ENCODE measurements at regions of chr11 and their contacts with region 1.

Region 1: GRCh38 chr11:59542142-59542810 is 30.9 kb downstream of the OR4D9 start:
- DNase-seq: no peak
- H3K4me3 Mint-ChIP-seq: no peak overlapping the region
- H3K27ac Mint-ChIP-seq: no peak overlapping the region
- H3K4me1 Mint-ChIP-seq: peaks cover 9% of the 10 kb centered on the region
- H3K27me3 Mint-ChIP-seq: peaks cover 13% of the 10 kb centered on the region

Region 2: DNA sequence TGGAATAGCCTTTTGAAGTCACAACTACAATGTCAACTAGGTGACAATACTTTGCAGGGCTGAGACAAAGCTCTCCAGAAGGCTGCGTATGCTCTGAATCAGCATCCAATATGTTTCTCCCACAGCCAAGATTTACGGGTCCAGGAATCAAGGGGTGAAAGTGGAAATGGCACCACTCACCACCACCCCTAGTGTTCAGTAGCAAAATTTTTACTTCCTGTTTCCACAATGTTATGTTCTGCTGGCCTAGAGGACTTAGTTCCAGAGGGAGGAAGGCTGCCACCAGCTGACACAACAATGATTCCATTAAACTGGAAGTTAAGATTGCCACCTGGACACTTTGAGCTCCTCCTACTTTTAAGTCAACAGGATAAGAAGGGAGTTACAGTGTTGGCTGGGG is 261.1 kb before region 1 on chr11:
- intact Hi-C with region 1: no loop called
- DNase-seq: no peak
- H3K4me3 Mint-ChIP-seq: no peak overlapping the region
- H3K27ac Mint-ChIP-seq: no peak overlapping the region
- H3K4me1 Mint-ChIP-seq: peaks cover 16% of the 10 kb centered on the region
- H3K27me3 Mint-ChIP-seq: peaks cover 13% of the 10 kb centered on the region

Region 3: DNA sequence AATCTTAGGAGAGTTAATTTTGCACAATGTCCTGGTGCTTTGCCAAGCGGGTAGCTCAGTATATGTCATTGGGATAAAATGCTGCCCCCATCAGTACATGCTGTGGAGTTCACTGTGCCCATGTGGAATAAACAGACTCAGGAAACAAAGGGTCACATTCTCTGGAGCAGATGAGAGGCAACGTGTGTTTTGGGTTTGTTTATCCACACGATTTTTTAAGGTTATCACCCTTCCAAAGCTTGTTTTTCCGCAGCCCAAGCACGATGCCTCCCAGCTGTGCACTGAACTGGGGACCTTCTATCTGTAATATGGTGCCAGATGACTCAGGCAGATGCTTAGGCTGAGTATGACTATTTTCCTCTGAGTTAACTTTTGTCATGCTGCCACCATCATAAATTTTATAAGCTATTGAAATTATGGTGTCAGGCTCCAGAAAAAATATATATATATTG is 79.1 kb before region 1 on chr11:
- intact Hi-C with region 1: no loop called
- DNase-seq: no peak
- H3K4me3 Mint-ChIP-seq: no peak overlapping the region
- H3K27ac Mint-ChIP-seq: no peak overlapping the region
- H3K4me1 Mint-ChIP-seq: no peaks in the 10 kb centered on the region
- H3K27me3 Mint-ChIP-seq: peaks cover 8% of the 10 kb centered on the region

Region 4: GRCh38 chr11:59560702-59561469 is 18.6 kb after region 1 on chr11:
- intact Hi-C with region 1: loop called (anchors 1 kb)
- DNase-seq: peak; percentile 54
- H3K4me3 Mint-ChIP-seq: peak overlapping the region; percentile 92
- H3K27ac Mint-ChIP-seq: peak overlapping the region; percentile 98
- H3K4me1 Mint-ChIP-seq: peaks cover 48% of the 10 kb centered on the region
- H3K27me3 Mint-ChIP-seq: peaks cover 10% of the 10 kb centered on the region

Region 5: GRCh38 chr11:59680287-59681154 is 138.2 kb after region 1 on chr11:
- intact Hi-C with region 1: loop called (anchors 1 kb)
- DNase-seq: peak; percentile 42
- H3K4me3 Mint-ChIP-seq: no peak overlapping the region
- H3K27ac Mint-ChIP-seq: no peak overlapping the region
- H3K4me1 Mint-ChIP-seq: no peaks in the 10 kb centered on the region
- H3K27me3 Mint-ChIP-seq: peaks cover 8% of the 10 kb centered on the region

Region 6: DNA sequence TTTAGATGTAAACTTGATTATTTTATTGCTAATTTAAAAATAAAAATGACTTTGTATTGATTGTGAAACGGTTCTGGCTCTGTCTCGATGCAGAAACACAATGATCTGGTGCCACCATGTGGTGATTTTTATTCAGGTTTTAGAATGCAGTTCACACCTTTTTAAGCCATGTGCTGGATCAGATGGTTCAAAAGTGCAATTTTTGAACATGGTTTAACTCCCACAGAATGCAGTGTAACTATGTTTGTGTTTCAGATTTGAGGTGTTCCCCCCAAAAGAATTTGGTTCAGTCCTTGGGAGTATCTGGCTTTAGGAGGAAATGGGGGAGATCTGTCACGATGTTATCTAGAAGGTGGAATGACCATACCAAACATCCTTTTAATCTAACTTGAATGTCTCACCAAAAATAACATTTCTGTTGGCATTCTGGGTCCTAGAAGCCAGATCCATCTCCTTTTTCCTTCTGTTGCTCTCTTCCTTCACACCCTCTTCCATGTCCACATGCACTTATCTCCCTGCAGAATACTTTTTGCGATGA is 260.4 kb after region 1 on chr11:
- intact Hi-C with region 1: loop called (anchors 1 kb)
- DNase-seq: peak; percentile 50
- H3K4me3 Mint-ChIP-seq: no peak overlapping the region
- H3K27ac Mint-ChIP-seq: no peak overlapping the region
- H3K4me1 Mint-ChIP-seq: peaks cover 24% of the 10 kb centered on the region
- H3K27me3 Mint-ChIP-seq: no peaks in the 10 kb centered on the region

Measured in activated T-helper 1 cell treated with anti-CD3 and anti-CD28 coated beads, Interleukin-12 subunit alpha, Interleukin-12 subunit beta, Interleukin-2, Interleukin-4 antibody, amounts not matched to agents 30 ng/mL and 10 ng/mL and 1 ng/mL, durations not matched to agents 14 hours and 24 hours and 36 hours (primary cell).